ENCODE measurements at regions of chr3 and their contacts with region 1.

Region 1: DNA sequence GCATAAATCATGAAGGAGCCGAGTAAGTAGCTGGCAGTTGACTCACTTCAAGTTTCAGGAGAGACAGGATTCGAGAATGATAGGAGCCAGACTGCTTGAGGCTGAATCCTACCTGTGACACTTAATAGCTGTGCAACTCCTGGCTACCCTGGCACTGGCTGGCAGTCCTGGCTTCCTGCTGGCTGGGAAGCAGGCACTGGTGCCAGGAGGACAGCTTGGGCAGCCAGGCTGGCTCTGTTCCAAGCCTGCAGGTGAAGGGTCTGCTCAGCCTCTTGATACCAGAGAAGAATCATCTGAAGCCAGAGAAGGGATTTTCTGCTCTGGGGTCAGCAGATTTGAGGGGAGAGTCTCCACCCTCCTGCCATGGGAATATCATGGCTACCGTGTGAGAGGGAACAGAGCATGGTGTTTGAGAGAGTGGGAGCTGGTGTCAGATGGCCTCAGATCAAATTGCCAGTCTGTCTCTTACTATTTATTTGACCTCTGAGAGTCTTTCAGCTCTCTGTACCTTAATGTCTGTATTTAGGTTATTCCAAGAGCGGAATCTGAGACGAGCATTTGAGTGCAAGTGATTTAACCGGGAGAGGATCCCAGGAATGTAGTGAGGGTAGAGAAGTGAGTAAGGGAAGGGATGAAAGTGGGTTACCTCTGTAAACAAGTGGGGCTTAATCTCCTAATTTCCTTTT is 4.4 kb upstream of the XIRP1 start:
- DNase-seq: no peak
- H3K4me3 ChIP-seq: no peak overlapping the region
- H3K27ac ChIP-seq: no peak overlapping the region
- H3K4me1 ChIP-seq: no peaks in the 10 kb centered on the region
- H3K27me3 ChIP-seq: peaks cover 0 to 2% (median 0%) of the 10 kb centered on the region in 5 experiments

Region 2: GRCh38 chr3:39158148-39158715 is 38.6 kb before region 1 on chr3:
- CTCF ChIA-PET with region 1: no interaction called
- POLR2A ChIA-PET with region 1: no interaction called
- DNase-seq: no peak
- H3K4me3 ChIP-seq: no peak overlapping the region
- H3K27ac ChIP-seq: no peak overlapping the region
- H3K4me1 ChIP-seq: peaks cover 0 to 6% (median 3%) of the 10 kb centered on the region in 4 experiments
- H3K27me3 ChIP-seq: no peaks in the 10 kb centered on the region

Region 3: GRCh38 chr3:39208463-39209055 is 11.7 kb after region 1 on chr3:
- CTCF ChIA-PET with region 1: interaction called, 58 read pairs
- POLR2A ChIA-PET with region 1: no interaction called
- DNase-seq: peak; percentile 49 to 60 (median 53)
- H3K4me3 ChIP-seq: no peak overlapping the region
- H3K27ac ChIP-seq: no peak overlapping the region
- H3K4me1 ChIP-seq: peaks cover 0 to 14% (median 4%) of the 10 kb centered on the region in 4 experiments
- H3K27me3 ChIP-seq: no peaks in the 10 kb centered on the region

Measured in common myeloid progenitor, CD34-positive (primary cell).